CD4-positive, alpha-beta T cell (primary cell): ENCODE measurements at regions of chr5 and their contacts with region 1.

Region 1: DNA sequence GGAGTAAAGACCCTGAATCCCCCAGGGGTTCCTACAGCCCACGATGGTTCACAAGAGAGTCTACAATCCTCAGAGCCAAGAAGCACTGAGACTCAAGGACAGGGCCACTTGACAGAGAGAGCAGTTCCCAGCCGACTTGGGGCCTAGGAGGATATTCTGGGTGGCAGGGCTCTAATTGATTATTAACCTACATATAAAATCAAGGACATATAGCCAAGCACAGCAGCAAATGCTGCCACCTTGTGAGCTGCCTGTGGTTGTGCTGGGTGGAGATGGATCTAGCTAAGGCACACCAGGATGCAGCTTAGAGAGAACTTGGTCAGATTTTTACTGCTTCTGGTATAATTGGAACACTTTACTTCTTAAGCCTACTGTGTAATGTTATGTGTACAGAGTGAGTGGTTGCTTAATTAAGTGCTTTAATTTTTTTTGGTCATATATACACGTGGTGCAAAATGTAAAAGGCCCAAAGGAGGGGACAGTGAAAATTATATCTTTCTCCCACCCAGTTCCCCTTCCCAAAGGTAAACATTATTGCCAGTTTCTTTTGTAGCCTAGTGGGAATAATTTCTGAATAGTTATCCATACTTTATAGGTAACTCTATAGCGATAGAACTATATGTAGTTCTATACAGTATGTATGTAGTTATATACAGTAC is 78.8 kb downstream of the F2RL2 start:
- DNase-seq: peak; percentile 37 to 85 (median 57)
- ATAC-seq: peak; percentile 20
- H3K4me3 ChIP-seq: peak overlapping the region; percentile 7
- H3K4me3 Mint-ChIP-seq: peak overlapping the region; percentile 78
- H3K27ac ChIP-seq: peak overlapping the region; percentile 77 to 80
- H3K27ac Mint-ChIP-seq: peak overlapping the region; percentile 98
- H3K4me1 ChIP-seq: peaks cover 76% of the 10 kb centered on the region
- H3K4me1 Mint-ChIP-seq: peaks cover 84% of the 10 kb centered on the region
- H3K27me3 ChIP-seq: no peaks in the 10 kb centered on the region
- H3K27me3 Mint-ChIP-seq: no peaks in the 10 kb centered on the region
- CTCF ChIP-seq: peak; percentile 86

Region 2: GRCh38 chr5:75717082-75717922 is 827.1 kb before region 1 on chr5 and contains the start of gene POC5:
- CTCF ChIA-PET with region 1: no interaction called
- POLR2A ChIA-PET with region 1: no interaction called
- intact Hi-C with region 1: loop called (anchors 10 kb)
- DNase-seq: peak; percentile 96 to 99 (median 98)
- ATAC-seq: peak; percentile 92
- H3K4me3 ChIP-seq: peak within 1 kb of the TSS; percentile 79
- H3K4me3 Mint-ChIP-seq: peak within 1 kb of the TSS; percentile 100
- H3K27ac ChIP-seq: peak within 1 kb of the TSS; percentile 71 to 82
- H3K27ac Mint-ChIP-seq: peak within 1 kb of the TSS; percentile 93
- H3K4me1 ChIP-seq: peaks cover 13% of the 10 kb centered on the region
- H3K4me1 Mint-ChIP-seq: peaks cover 42% of the 10 kb centered on the region
- H3K27me3 ChIP-seq: no peaks in the 10 kb centered on the region
- H3K27me3 Mint-ChIP-seq: no peaks in the 10 kb centered on the region
- CTCF ChIP-seq: no peak
- total RNA-seq, gene POC5: 5.7 to 6.2 TPM

Region 3: DNA sequence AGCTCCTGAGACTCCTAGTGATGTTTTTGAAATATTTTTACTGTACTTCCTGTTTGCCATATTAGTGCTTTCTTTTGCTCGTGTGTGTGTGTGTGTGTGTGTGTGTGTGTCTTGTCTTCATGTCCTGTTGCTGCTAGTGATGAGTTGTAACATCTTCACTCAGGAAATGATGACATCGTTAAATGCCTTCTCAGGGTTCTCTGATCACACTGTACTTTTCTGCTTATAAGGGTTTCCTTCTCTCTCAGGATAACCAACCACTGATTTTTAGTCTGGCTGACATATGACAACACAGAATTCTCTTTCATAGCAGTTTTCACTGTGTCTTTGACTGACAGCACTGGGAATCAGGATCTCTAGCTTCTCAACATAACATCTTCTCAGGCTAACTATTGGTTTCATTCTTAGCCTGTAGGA is 445.1 kb before region 1 on chr5:
- CTCF ChIA-PET with region 1: no interaction called
- POLR2A ChIA-PET with region 1: no interaction called
- intact Hi-C with region 1: loop called in 1 of 2 experiments (anchors 5 kb)
- DNase-seq: peak in 6 of 14 experiments; percentile 15 to 73 (median 54)
- ATAC-seq: peak; percentile 95
- H3K4me3 ChIP-seq: no peak overlapping the region
- H3K4me3 Mint-ChIP-seq: no peak overlapping the region
- H3K27ac ChIP-seq: peak overlapping the region in 1 of 2 donors; percentile 58
- H3K27ac Mint-ChIP-seq: peak overlapping the region; percentile 6
- H3K4me1 ChIP-seq: no peaks in the 10 kb centered on the region
- H3K4me1 Mint-ChIP-seq: peaks cover 10% of the 10 kb centered on the region
- H3K27me3 ChIP-seq: peaks cover 3 to 6% of the 10 kb centered on the region in 2 experiments
- H3K27me3 Mint-ChIP-seq: peaks cover 26% of the 10 kb centered on the region
- CTCF ChIP-seq: no peak

Region 4: GRCh38 chr5:76256116-76256889 is 288.1 kb before region 1 on chr5:
- CTCF ChIA-PET with region 1: no interaction called
- POLR2A ChIA-PET with region 1: interaction called, 5 read pairs
- intact Hi-C with region 1: loop called in 1 of 2 experiments (anchors 5 kb)
- DNase-seq: peak; percentile 38 to 84 (median 49)
- ATAC-seq: peak; percentile 99
- H3K4me3 ChIP-seq: no peak overlapping the region
- H3K4me3 Mint-ChIP-seq: no peak overlapping the region
- H3K27ac ChIP-seq: no peak overlapping the region
- H3K27ac Mint-ChIP-seq: no peak overlapping the region
- H3K4me1 ChIP-seq: peaks cover 4% of the 10 kb centered on the region
- H3K4me1 Mint-ChIP-seq: peaks cover 7% of the 10 kb centered on the region
- H3K27me3 ChIP-seq: no peaks in the 10 kb centered on the region
- H3K27me3 Mint-ChIP-seq: no peaks in the 10 kb centered on the region
- CTCF ChIP-seq: peak; percentile 78

Region 5: DNA sequence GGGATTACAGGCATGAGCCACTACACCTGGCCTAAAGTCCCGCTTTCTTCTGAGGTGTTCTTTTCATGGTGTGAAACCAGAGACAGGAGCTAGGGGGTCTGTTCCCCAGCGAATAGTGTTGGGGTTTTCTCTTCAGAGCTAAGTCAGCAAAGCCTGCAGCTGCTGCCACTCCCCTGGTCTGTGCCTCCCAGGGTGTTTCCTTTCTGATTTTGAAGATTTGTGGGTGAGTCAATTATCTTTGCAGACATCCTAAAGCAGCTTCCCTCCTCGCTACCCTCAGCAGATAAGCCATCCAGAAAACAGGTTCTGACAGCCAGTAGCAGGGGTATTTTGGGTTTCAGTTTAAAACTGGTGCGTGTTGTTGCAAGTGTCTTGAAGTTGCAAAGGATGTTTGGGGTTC is 213.3 kb before region 1 on chr5:
- CTCF ChIA-PET with region 1: interaction called, 6 read pairs
- POLR2A ChIA-PET with region 1: interaction called, 18 read pairs
- intact Hi-C with region 1: no loop called
- DNase-seq: peak in 13 of 14 experiments; percentile 9 to 68 (median 37)
- ATAC-seq: peak; percentile 84
- H3K4me3 ChIP-seq: peak overlapping the region; percentile 2
- H3K4me3 Mint-ChIP-seq: peak overlapping the region; percentile 70
- H3K27ac ChIP-seq: peak overlapping the region in 1 of 2 donors; percentile 63
- H3K27ac Mint-ChIP-seq: peak overlapping the region; percentile 88
- H3K4me1 ChIP-seq: peaks cover 59% of the 10 kb centered on the region
- H3K4me1 Mint-ChIP-seq: peaks cover 75% of the 10 kb centered on the region
- H3K27me3 ChIP-seq: no peaks in the 10 kb centered on the region
- H3K27me3 Mint-ChIP-seq: no peaks in the 10 kb centered on the region
- CTCF ChIP-seq: no peak

Region 6: GRCh38 chr5:76402886-76403765 is 141.3 kb before region 1 on chr5 and contains the start of gene IQGAP2:
- CTCF ChIA-PET with region 1: interaction called, 75 read pairs
- POLR2A ChIA-PET with region 1: interaction called, 136 read pairs
- intact Hi-C with region 1: loop called (anchors 1 to 2 kb)
- DNase-seq: peak; percentile 64 to 95 (median 81)
- ATAC-seq: peak; percentile 58
- H3K4me3 ChIP-seq: peak within 1 kb of the TSS; percentile 96
- H3K4me3 Mint-ChIP-seq: peak within 1 kb of the TSS; percentile 92
- H3K27ac ChIP-seq: peak within 1 kb of the TSS; percentile 90 to 93
- H3K27ac Mint-ChIP-seq: peak within 1 kb of the TSS; percentile 94
- H3K4me1 ChIP-seq: peaks cover 45% of the 10 kb centered on the region
- H3K4me1 Mint-ChIP-seq: peaks cover 67% of the 10 kb centered on the region
- H3K27me3 ChIP-seq: no peaks in the 10 kb centered on the region
- H3K27me3 Mint-ChIP-seq: no peaks in the 10 kb centered on the region
- CTCF ChIP-seq: peak; percentile 78
- total RNA-seq, gene IQGAP2: 58.8 TPM

Region 7: GRCh38 chr5:76473661-76474060 is 70.7 kb before region 1 on chr5:
- CTCF ChIA-PET with region 1: interaction called, 7 read pairs
- POLR2A ChIA-PET with region 1: interaction called, 38 read pairs
- intact Hi-C with region 1: loop called (anchors 1 to 5 kb)
- DNase-seq: peak; percentile 40 to 90 (median 64)
- ATAC-seq: peak; percentile 95
- H3K4me3 ChIP-seq: no peak overlapping the region
- H3K4me3 Mint-ChIP-seq: peak overlapping the region; percentile 26
- H3K27ac ChIP-seq: peak overlapping the region; percentile 68
- H3K27ac Mint-ChIP-seq: peak overlapping the region; percentile 91
- H3K4me1 ChIP-seq: peaks cover 58% of the 10 kb centered on the region
- H3K4me1 Mint-ChIP-seq: peaks cover 84% of the 10 kb centered on the region
- H3K27me3 ChIP-seq: no peaks in the 10 kb centered on the region
- H3K27me3 Mint-ChIP-seq: no peaks in the 10 kb centered on the region
- CTCF ChIP-seq: no peak

Region 8: GRCh38 chr5:77266291-77266690 is 721.9 kb after region 1 on chr5:
- CTCF ChIA-PET with region 1: no interaction called
- POLR2A ChIA-PET with region 1: no interaction called
- intact Hi-C with region 1: no loop called
- DNase-seq: no peak
- ATAC-seq: no peak
- H3K4me3 ChIP-seq: no peak overlapping the region
- H3K4me3 Mint-ChIP-seq: no peak overlapping the region
- H3K27ac ChIP-seq: no peak overlapping the region
- H3K27ac Mint-ChIP-seq: no peak overlapping the region
- H3K4me1 ChIP-seq: no peaks in the 10 kb centered on the region
- H3K4me1 Mint-ChIP-seq: no peaks in the 10 kb centered on the region
- H3K27me3 ChIP-seq: peaks cover 3 to 5% of the 10 kb centered on the region in 2 experiments
- H3K27me3 Mint-ChIP-seq: peaks cover 11% of the 10 kb centered on the region
- CTCF ChIP-seq: no peak